ENCODE measurements at regions of chr12 and their contacts with region 1.

Region 1: GRCh38 chr12:3228552-3228951 is 151.4 kb downstream of the TSPAN9 start:
- DNase-seq: no peak
- ATAC-seq: no peak
- H3K4me3 ChIP-seq: no peak overlapping the region
- H3K4me3 Mint-ChIP-seq: no peak overlapping the region
- H3K27ac ChIP-seq: no peak overlapping the region
- H3K27ac Mint-ChIP-seq: no peak overlapping the region
- H3K4me1 ChIP-seq: no peaks in the 10 kb centered on the region
- H3K4me1 Mint-ChIP-seq: peaks cover 0 to 7% (median 0%) of the 10 kb centered on the region in 3 donors
- H3K27me3 ChIP-seq: peaks cover 0 to 44% of the 10 kb centered on the region in 2 experiments
- H3K27me3 Mint-ChIP-seq: peaks cover 6 to 7% of the 10 kb centered on the region in 2 donors

Region 2: DNA sequence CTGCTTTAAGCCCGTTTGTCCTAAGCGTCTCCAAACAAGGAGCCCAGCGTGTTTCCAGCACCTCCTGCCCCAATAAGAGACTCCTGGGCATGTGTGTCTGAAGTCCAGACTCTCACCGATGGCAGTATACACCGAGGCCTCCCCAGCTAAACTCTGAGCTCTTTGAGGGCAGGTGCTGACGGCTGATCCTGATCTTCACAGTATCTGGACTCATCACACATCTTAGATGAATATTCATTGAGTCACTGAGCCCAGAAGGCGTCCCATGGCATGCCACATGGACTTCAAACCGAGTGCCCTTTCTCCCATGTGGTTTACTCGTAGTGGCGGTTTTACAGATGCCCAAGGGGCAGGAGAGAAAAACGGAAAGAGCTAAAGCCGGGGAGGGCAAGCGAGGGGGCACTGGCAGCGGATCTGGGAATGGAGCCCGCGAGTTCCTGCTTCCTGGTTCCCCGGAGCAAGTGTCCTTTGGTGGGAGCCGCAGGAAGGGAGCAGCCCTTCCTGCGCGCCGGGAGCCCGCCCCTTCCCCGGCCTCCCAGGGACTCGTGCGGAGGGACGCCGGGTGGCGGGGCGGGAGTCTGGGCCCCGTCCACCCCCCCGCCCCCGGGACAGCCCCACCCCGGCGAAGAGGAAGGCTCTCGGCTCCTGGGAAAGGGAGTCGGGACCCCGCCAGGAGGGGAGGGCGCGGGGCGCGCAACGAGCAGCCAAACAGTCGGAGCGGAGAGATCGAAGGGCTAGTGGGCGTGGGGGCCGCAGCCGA is 269.9 kb before region 1 on chr12:
- CTCF ChIA-PET with region 1: no interaction called
- POLR2A ChIA-PET with region 1: no interaction called
- DNase-seq: no peak
- ATAC-seq: no peak
- H3K4me3 ChIP-seq: no peak overlapping the region
- H3K4me3 Mint-ChIP-seq: peak overlapping the region; percentile 53 to 81 (median 64)
- H3K27ac ChIP-seq: no peak overlapping the region
- H3K27ac Mint-ChIP-seq: peak overlapping the region in 1 of 2 donors; percentile 72
- H3K4me1 ChIP-seq: peaks cover 0 to 9% of the 10 kb centered on the region in 2 experiments
- H3K4me1 Mint-ChIP-seq: peaks cover 19% of the 10 kb centered on the region in 3 donors
- H3K27me3 ChIP-seq: peaks cover 14 to 43% of the 10 kb centered on the region in 2 experiments
- H3K27me3 Mint-ChIP-seq: peaks cover 46 to 61% of the 10 kb centered on the region in 2 donors

Region 3: DNA sequence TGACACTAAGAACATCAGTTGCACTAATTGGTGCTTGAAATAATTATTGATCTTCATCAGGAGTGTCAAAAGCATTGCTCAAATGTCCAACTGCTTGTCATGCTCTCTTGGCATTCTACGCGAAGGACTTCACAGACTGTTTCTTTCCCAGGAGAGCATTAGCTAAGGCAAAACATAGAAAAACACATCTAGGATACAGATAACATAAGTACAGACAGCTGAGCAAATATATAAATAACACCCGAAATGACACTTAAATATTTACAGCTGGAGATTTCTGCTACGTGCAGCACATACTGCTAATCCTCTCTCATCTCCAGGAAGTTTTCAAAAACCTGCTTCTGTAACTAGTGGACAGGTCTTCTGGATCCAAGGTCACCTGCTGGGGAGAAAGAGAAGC is 142.5 kb after region 1 on chr12:
- CTCF ChIA-PET with region 1: interaction called in 1 of 2 experiments, 13 read pairs
- POLR2A ChIA-PET with region 1: no interaction called
- DNase-seq: no peak
- ATAC-seq: no peak
- H3K4me3 ChIP-seq: no peak overlapping the region
- H3K4me3 Mint-ChIP-seq: no peak overlapping the region
- H3K27ac ChIP-seq: no peak overlapping the region
- H3K27ac Mint-ChIP-seq: no peak overlapping the region
- H3K4me1 ChIP-seq: no peaks in the 10 kb centered on the region
- H3K4me1 Mint-ChIP-seq: no peaks in the 10 kb centered on the region
- H3K27me3 ChIP-seq: peaks cover 8 to 23% of the 10 kb centered on the region in 2 experiments
- H3K27me3 Mint-ChIP-seq: peaks cover 0 to 5% of the 10 kb centered on the region in 2 donors

Measured in T-cell (primary cell).